Cardiac septum (tissue), 1 donor: ENCODE measurements at regions of chr11 and their contacts with region 1.

Region 1: DNA sequence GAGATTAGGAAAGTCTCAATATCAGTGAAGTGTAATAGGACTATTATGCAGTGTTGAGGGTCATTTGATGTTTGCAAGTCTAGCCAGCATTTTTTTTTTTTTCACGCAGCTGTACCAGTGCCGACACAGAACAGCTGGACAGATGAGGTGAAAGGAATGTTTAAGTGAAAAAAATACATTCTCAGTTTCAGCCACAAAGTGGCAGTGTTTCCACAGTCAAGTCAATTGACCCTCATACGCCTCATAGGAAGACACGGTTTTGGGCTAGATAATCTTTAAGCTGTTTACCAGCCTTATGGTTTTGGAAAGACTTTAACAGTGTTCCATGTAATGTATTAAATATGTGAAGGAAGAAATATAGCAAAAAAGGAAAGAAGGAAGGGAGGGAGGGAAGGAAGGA is 349.9 kb upstream of the ANO3 start:
- DNase-seq: no peak

Region 2: GRCh38 chr11:26025680-26026477 is 43.9 kb after region 1 on chr11:
- intact Hi-C with region 1: no loop called
- DNase-seq: no peak

Region 3: DNA sequence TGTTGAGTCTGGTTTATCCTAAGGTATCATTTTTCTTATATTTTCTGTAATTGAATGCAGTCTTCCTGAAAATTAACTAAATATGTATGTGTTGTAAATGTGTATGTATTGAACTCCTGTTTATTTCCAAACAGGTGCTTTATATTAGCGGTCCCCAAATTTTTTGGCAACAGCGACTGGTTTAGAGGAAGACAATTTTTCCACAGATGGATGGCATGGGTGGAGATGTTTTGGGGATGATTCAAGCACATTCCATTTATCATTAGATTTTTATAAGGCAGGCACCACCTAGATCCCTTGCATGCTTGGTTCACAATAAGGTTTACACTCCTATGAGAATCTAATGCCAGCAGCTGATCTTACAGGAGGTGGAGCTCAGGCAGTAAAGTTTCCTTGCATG is 139.5 kb after region 1 on chr11:
- intact Hi-C with region 1: no loop called
- DNase-seq: no peak

Region 4: DNA sequence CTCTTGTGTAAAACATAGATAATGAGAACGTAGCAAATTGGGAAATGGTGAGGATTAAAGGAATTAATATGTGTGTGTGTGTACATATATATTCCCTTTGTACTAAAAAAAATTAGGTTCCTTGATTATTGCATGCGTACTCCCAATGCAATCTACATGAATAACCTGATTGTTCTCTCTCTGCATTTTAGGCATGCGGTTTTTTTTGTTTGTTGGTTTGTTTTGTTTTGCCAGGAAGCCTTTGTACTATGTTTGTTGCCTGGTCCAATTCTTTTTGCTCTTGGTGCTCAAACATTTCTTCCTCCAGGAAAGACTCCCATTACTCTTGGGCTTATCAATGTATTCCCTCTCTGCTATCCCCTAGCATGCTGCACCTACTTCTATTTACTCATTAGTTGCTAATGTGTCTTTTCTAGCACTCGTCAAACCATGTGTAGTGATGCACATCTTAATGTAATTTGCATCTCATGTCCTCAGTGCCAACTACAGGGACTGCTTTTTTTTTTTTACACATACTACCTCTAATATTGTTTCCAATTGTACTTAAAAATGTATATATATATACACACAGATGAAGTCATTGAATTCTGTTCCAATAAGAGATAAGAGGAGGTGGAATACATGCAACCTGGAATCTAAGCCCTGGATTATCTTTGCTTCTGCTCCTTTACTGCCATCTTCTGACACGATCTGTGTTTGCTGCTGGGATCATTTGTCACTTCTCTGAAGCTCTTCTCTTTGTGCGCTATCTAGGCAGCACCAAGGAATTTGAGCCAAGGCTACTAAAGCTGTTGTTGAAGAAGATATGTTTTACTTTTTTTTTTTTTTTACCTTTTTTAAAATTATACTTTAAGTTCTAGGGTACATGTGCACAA is 152.7 kb after region 1 on chr11:
- intact Hi-C with region 1: loop called (anchors 2 kb)
- DNase-seq: no peak

Region 5: DNA sequence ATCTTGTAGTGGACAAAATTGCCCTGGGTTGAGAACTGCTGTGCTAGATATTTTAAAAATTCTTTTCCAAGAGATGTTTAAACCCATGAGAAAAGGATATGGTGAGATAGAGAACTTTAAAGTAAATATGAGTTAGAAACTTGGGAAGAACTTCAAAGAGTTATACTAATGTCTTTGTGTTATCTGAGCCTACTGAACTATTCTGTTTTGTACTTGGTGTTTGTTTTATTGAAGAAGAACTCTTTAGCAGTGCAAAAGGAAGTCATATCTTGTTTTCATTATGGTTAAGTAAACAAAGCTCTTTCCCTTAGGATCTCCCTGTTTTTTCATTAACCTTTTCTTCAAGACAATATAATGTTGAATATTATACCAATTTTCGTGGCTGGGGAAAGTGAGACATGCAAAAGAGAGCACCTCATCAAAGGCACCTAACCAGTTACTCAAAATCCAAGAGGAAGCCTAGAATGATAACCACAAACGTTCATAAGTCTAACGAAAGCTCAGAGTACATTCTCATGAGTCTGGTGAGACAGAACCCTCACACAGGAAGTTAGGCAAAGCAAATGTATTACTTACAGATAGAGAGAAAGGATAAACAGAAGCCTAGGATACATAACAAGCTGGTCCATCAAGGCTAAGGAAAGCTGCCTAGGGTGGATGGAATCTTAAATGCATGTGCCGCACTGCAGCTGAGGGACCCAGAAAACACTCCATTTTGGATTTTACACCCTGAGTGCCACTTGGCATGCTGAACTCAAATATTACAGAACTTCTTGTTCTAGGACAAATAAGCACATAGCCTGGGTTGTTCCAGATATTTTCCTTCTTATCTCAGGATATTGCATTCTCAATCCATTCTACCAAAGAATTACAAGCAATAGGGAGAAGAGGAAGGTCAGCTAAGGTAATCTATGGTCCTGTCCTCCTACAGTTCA is 237.5 kb after region 1 on chr11:
- intact Hi-C with region 1: loop called (anchors 5 kb)
- DNase-seq: no peak

Region 6: GRCh38 chr11:26276798-26277424 is 294.9 kb after region 1 on chr11:
- intact Hi-C with region 1: loop called (anchors 5 kb)
- DNase-seq: no peak